ENCODE measurements at regions of chr12 and their contacts with region 1.

Region 1: DNA sequence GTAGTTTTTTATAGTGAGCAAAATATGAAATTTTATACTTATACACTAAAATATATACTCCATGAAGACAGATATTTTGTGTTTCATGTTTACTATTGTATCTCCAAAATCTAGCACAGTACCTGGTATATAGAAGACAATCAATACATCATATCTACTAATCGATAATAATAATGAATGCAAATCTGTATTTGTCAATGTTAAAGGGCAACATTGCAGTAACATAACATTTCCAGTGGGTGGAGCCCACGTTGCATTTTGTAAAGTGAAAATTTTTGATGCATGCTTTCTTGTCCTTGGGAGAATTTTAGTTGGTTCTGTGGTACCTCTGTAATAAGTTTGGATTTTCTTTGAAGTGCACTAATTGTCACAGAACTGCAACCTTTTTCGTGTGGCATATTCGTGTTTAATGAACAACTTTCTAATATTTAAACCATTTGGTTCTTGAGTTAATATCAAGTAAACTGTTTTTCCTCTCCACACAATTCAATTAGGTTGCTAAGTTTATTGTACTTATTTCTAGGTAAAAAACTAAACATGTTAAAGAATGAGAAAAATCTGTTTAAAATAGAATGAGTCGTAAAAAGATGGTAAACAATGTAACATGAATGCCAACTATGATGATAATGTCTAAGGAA is 47.4 kb downstream of the AVPR1A start:
- DNase-seq: peak; percentile 34
- H3K4me3 Mint-ChIP-seq: no peak overlapping the region
- H3K27ac Mint-ChIP-seq: no peak overlapping the region
- H3K4me1 Mint-ChIP-seq: peaks cover 7% of the 10 kb centered on the region
- H3K27me3 Mint-ChIP-seq: no peaks in the 10 kb centered on the region
- CTCF ChIP-seq: peak; percentile 79

Region 2: GRCh38 chr12:63276537-63277365 is 173.1 kb after region 1 on chr12:
- CTCF ChIA-PET with region 1: no interaction called
- intact Hi-C with region 1: loop called (anchors 1 kb)
- DNase-seq: peak; percentile 78
- H3K4me3 Mint-ChIP-seq: no peak overlapping the region
- H3K27ac Mint-ChIP-seq: no peak overlapping the region
- H3K4me1 Mint-ChIP-seq: peaks cover 8% of the 10 kb centered on the region
- H3K27me3 Mint-ChIP-seq: no peaks in the 10 kb centered on the region
- CTCF ChIP-seq: peak; percentile 61

Region 3: DNA sequence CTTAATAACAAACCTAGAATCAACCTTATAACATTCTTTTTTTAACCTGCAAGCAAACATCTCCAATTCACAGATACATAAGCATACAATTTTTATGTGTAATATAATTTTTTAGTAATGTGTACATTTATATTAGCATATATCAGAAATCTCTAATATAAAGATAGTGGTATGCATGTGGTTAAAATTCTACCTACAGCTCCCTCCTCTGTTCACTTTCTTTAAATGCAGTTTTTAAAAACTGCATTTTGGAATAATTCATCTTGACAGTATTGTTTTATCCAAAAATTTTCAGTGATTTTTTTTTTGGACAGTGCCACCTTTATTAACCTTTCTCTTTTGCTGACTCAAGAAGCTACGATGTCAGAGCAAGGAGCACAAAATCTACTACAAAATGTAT is 662.9 kb after region 1 on chr12:
- CTCF ChIA-PET with region 1: no interaction called
- intact Hi-C with region 1: loop called (anchors 1 kb)
- DNase-seq: no peak
- H3K4me3 Mint-ChIP-seq: no peak overlapping the region
- H3K27ac Mint-ChIP-seq: no peak overlapping the region
- H3K4me1 Mint-ChIP-seq: no peaks in the 10 kb centered on the region
- H3K27me3 Mint-ChIP-seq: peaks cover 27% of the 10 kb centered on the region
- CTCF ChIP-seq: peak; percentile 13

Measured in Calu3 (cell line).